ENCODE measurements at regions of chr10 and their contacts with region 1.

Region 1: DNA sequence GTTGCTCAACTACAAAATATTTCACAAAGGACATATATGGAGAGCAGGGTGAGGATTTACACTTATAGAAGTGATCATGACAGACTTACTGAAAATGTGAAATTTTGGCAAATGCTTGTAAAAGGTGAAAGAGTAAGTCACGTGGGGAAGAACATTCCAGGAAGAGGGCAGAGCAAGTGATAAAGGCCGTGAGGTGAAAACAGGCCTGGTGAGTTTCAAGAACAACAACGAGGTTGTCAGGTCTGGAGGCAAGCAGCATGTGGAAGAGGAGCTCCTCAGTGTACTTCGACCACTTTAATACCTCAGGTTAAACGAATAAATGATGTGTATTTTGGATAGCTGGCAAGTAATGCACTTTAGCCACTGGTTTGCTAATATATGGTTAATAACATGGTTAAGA is 706.7 kb downstream of the PCDH15 start:
- DNase-seq: no peak
- ATAC-seq: no peak
- H3K4me3 ChIP-seq: no peak overlapping the region
- H3K27ac ChIP-seq: no peak overlapping the region
- H3K4me1 ChIP-seq: no peaks in the 10 kb centered on the region
- H3K27me3 ChIP-seq: no peaks in the 10 kb centered on the region

Region 2: GRCh38 chr10:54108961-54109360 is 14.6 kb after region 1 on chr10:
- intact Hi-C with region 1: loop called in 1 of 2 experiments (anchors 1 kb)
- DNase-seq: no peak
- ATAC-seq: no peak
- H3K4me3 ChIP-seq: no peak overlapping the region
- H3K27ac ChIP-seq: no peak overlapping the region
- H3K4me1 ChIP-seq: no peaks in the 10 kb centered on the region
- H3K27me3 ChIP-seq: peaks cover 0 to 2% of the 10 kb centered on the region in 2 donors